Heart left ventricle (tissue), 16 donors: ENCODE measurements at regions of chr2 and their contacts with region 1.

Region 1: GRCh38 chr2:37414470-37414949 is 70.1 kb downstream of the QPCT start:
- DNase-seq: no peak
- ATAC-seq: peak; percentile 72 to 88 (median 79)
- H3K4me3 ChIP-seq: peak overlapping the region in 3 of 12 donors; percentile 2 to 25 (median 12)
- H3K27ac ChIP-seq: peak overlapping the region in 11 of 12 donors; percentile 5 to 66 (median 39)
- H3K4me1 ChIP-seq: peaks cover 0 to 21% (median 9%) of the 10 kb centered on the region in 12 donors
- H3K27me3 ChIP-seq: no peaks in the 10 kb centered on the region
- CTCF ChIP-seq: peak; percentile 64 to 93 (median 86)
- POLR2A ChIP-seq: no peak

Region 2: DNA sequence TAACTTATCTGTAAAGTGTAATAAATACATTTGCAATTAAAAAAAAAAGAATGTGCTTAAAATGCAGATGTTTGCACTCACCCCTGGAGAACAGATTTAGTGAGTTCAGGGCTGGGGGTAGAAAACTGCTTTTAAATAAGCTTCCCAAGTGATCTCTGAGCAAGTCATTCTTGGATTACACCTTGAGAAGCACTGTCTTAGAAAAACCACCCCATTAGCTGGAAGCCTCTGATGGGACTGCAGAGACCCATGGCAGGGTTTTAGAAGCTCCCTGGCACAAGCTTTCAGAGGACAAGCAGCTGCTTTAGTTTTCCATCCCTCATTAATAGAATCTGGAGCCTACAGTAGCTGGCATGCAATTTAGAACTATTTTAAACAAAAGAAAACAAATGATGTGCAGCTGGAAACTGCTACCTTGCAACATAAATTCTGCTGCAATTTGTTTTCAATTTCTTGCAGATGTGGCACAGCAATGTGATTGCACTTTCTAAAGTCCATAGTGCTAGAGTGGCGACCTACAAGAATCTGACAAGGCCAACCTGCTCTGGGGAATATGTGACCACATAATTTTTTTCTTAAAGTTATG is 115.4 kb after region 1 on chr2:
- intact Hi-C with region 1: loop called in 4 of 10 experiments (anchors 10 kb)
- DNase-seq: no peak
- ATAC-seq: no peak
- H3K4me3 ChIP-seq: no peak overlapping the region
- H3K27ac ChIP-seq: no peak overlapping the region
- H3K4me1 ChIP-seq: peaks cover 0 to 12% (median 2%) of the 10 kb centered on the region in 12 donors
- H3K27me3 ChIP-seq: no peaks in the 10 kb centered on the region
- CTCF ChIP-seq: no peak
- POLR2A ChIP-seq: no peak

Region 3: DNA sequence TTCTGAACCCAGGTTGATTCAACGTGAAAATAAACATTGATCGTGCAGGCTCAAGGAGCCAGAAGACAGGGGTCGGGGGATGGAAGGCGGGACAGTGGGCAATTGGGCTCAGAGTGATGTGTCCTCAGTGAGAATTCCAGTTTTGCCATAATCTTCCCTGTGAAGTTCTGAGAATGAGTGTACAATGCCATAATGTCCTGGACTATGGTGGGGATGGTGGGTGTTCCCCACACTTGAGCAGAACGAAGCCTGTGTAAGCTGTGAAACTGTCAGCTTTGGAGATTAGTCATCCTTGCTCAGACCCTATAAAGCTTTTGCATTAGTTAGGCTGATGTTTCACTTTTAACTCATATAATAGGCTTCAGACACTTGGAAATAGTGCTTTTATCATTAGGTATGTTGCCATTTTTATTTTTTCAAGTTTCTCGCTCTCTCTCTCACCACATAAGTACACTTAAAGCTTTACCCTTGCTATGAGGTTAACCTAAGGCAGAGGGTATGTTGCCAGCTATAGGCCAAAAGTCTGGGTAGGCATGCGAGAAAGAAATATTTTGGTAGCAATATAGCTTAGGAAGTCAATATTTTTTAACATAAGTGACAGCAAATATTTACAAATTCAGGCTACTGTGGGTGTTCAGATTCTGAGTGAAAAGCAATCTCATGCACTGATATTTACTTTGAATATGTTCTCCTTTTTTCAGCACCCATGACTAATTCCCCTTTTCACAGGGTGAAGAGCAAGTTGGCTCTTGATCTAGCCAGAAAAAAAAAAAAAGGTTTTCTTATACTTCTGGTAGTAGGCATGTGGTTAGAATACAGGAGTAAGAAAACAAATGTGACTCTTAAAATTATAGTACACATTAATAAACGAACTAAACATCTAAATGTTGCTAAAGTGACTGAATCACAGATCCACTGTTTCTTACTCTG is 209.7 kb after region 1 on chr2:
- intact Hi-C with region 1: loop called in 1 of 10 experiments (anchors 10 kb)
- DNase-seq: no peak
- ATAC-seq: no peak
- H3K4me3 ChIP-seq: no peak overlapping the region
- H3K27ac ChIP-seq: peak overlapping the region in 1 of 12 donors; percentile 78
- H3K4me1 ChIP-seq: peaks cover 0 to 40% (median 11%) of the 10 kb centered on the region in 12 donors
- H3K27me3 ChIP-seq: no peaks in the 10 kb centered on the region
- CTCF ChIP-seq: no peak
- POLR2A ChIP-seq: no peak

Region 4: GRCh38 chr2:37653805-37654378 is 239.4 kb after region 1 on chr2:
- intact Hi-C with region 1: loop called in 2 of 10 experiments (anchors 5 to 10 kb)
- DNase-seq: peak; percentile 70 to 89 (median 79)
- ATAC-seq: peak; percentile 74 to 87 (median 79)
- H3K4me3 ChIP-seq: peak overlapping the region in 9 of 12 donors; percentile 1 to 38 (median 19)
- H3K27ac ChIP-seq: peak overlapping the region; percentile 76 to 95 (median 90)
- H3K4me1 ChIP-seq: peaks cover 28 to 98% (median 90%) of the 10 kb centered on the region in 12 donors
- H3K27me3 ChIP-seq: no peaks in the 10 kb centered on the region
- CTCF ChIP-seq: no peak
- POLR2A ChIP-seq: peak in 1 of 2 donors; percentile 34

Region 5: DNA sequence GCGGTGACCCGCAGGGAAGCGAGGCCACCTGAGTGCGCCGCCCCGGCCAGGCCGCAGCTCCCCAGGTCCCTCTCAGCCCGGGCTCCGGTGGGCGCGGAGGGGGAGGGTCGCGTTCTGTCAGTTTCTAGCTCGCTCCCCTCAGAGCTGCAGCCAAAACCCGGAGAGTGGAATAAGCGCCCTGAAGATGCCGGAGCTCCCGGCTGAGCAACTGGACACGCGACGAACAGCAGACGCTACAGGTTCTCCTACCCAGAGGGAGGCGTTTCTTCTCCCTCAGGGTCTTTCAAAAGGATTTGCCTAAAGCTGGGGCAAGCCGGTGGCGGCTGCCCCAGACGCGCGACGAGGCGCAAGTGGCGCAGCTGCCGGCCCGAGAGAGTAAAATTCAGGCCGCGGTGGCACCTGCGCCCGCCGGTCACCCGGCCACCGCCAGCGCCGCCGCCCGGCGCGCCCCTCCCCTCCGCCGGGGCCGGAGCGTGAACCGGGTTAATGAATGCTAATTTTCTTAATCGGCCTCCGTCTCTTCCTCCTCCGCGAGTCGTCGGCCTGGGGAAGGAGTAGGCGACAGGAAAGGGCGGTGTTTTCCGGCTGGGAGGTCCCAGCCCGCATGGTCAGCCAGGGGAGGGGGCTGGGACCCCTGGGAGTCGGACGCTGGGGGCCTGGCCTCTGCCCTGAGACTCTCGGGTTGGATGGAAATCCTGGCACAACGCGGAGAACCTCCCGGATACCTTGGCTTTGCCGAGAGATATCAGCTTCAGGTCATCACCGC is 257.8 kb after region 1 on chr2:
- intact Hi-C with region 1: loop called in 6 of 10 experiments (anchors 2 to 10 kb)
- DNase-seq: peak; percentile 83 to 87 (median 84)
- ATAC-seq: peak; percentile 68 to 86 (median 73)
- H3K4me3 ChIP-seq: peak overlapping the region; percentile 54 to 99 (median 92)
- H3K27ac ChIP-seq: peak overlapping the region; percentile 92 to 100 (median 98)
- H3K4me1 ChIP-seq: peaks cover 0 to 64% (median 14%) of the 10 kb centered on the region in 12 donors
- H3K27me3 ChIP-seq: no peaks in the 10 kb centered on the region
- CTCF ChIP-seq: peak in 1 of 12 donors; percentile 9
- POLR2A ChIP-seq: peak in 1 of 2 donors; percentile 19

Region 6: DNA sequence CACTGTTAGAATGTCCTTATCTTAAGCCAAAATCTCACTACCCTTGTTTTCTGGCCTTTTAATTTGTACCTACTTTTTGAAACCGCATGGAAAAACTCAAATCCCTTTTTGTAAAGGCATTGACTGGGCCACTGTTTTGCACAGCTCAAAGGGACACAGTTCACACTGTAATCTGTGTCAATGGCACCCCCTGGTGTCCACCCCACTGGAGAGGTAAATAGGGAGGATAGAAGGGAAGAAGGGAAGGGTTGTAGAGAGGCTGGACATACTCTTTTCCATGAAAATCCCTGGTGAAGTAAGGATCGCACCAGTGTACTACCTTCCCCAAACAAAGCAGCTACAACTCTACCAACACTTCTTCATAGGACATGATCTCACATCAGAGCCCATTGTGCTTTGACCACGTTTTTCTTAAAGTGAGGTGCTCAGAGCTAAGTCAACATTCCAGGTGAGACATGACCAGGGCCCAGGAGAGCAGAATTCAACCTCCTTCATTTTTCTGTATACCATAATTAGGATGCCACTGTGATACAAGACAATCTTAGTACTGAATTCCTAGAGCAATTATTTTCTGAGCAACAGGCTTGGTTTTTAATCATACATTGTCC is 418.2 kb after region 1 on chr2:
- intact Hi-C with region 1: loop called (anchors 1 to 5 kb)
- DNase-seq: peak; percentile 82 to 91 (median 88)
- ATAC-seq: peak; percentile 62 to 87 (median 80)
- H3K4me3 ChIP-seq: no peak overlapping the region
- H3K27ac ChIP-seq: peak overlapping the region in 5 of 12 donors; percentile 32 to 86 (median 79)
- H3K4me1 ChIP-seq: peaks cover 0 to 45% (median 31%) of the 10 kb centered on the region in 12 donors
- H3K27me3 ChIP-seq: no peaks in the 10 kb centered on the region
- CTCF ChIP-seq: peak; percentile 60 to 84 (median 77)
- POLR2A ChIP-seq: no peak